ENCODE measurements at regions of chr1 and their contacts with region 1.

Region 1: GRCh38 chr1:12124693-12125421 is 41.9 kb upstream of the TNFRSF1B start:
- DNase-seq: peak; percentile 62 to 88 (median 76)
- ATAC-seq: peak; percentile 86
- H3K4me3 ChIP-seq: no peak overlapping the region
- H3K4me3 Mint-ChIP-seq: peak overlapping the region in 8 of 10 donors; percentile 24 to 65 (median 39)
- H3K27ac ChIP-seq: no peak overlapping the region
- H3K27ac Mint-ChIP-seq: peak overlapping the region in 8 of 9 donors; percentile 2 to 92 (median 46)
- H3K4me1 ChIP-seq: peaks cover 16 to 17% of the 10 kb centered on the region in 2 donors
- H3K4me1 Mint-ChIP-seq: peaks cover 39 to 46% (median 42%) of the 10 kb centered on the region in 7 donors
- H3K27me3 ChIP-seq: no peaks in the 10 kb centered on the region
- H3K27me3 Mint-ChIP-seq: no peaks in the 10 kb centered on the region

Region 2: GRCh38 chr1:12142891-12143630 is 18.2 kb after region 1 on chr1:
- CTCF ChIA-PET with region 1: interaction called, 45 read pairs
- POLR2A ChIA-PET with region 1: interaction called, 3 read pairs
- intact Hi-C with region 1: no loop called
- DNase-seq: no peak
- ATAC-seq: peak; percentile 66
- H3K4me3 ChIP-seq: no peak overlapping the region
- H3K4me3 Mint-ChIP-seq: peak overlapping the region in 8 of 10 donors; percentile 1 to 69 (median 52)
- H3K27ac ChIP-seq: no peak overlapping the region
- H3K27ac Mint-ChIP-seq: peak overlapping the region; percentile 76 to 94 (median 92)
- H3K4me1 ChIP-seq: peaks cover 24 to 37% of the 10 kb centered on the region in 2 donors
- H3K4me1 Mint-ChIP-seq: peaks cover 37 to 54% (median 46%) of the 10 kb centered on the region in 7 donors
- H3K27me3 ChIP-seq: no peaks in the 10 kb centered on the region
- H3K27me3 Mint-ChIP-seq: no peaks in the 10 kb centered on the region

Region 3: DNA sequence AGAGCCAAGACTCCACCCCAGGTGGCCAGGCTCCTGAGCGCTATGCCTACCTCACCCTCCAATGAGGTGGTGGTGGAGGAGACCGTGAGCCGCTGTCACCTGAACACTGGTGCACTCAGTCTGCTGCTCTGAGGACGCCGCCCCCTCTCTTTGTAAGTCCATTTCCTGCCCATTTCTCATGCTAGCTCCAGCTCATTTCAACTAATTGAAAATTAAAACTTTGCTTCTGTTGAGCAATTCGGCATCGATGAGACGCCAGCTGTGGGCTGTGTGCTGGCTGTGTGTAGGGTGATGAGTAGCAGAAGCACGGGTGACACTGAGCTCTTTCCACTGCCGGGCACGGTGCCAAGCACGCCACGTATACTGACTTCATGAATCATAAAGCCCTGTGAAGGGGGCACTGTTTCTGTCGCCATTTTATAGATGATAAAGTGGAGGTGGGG is 53.2 kb after region 1 on chr1:
- CTCF ChIA-PET with region 1: interaction called, 36 read pairs
- POLR2A ChIA-PET with region 1: interaction called, 15 read pairs
- intact Hi-C with region 1: loop called (anchors 1 kb)
- DNase-seq: peak; percentile 75 to 96 (median 85)
- ATAC-seq: peak; percentile 74
- H3K4me3 ChIP-seq: peak overlapping the region; percentile 38
- H3K4me3 Mint-ChIP-seq: peak overlapping the region; percentile 81 to 92 (median 86)
- H3K27ac ChIP-seq: peak overlapping the region; percentile 82
- H3K27ac Mint-ChIP-seq: peak overlapping the region; percentile 89 to 100 (median 97)
- H3K4me1 ChIP-seq: peaks cover 66 to 80% of the 10 kb centered on the region in 2 donors
- H3K4me1 Mint-ChIP-seq: peaks cover 51 to 91% (median 80%) of the 10 kb centered on the region in 7 donors
- H3K27me3 ChIP-seq: no peaks in the 10 kb centered on the region
- H3K27me3 Mint-ChIP-seq: no peaks in the 10 kb centered on the region

Region 4: DNA sequence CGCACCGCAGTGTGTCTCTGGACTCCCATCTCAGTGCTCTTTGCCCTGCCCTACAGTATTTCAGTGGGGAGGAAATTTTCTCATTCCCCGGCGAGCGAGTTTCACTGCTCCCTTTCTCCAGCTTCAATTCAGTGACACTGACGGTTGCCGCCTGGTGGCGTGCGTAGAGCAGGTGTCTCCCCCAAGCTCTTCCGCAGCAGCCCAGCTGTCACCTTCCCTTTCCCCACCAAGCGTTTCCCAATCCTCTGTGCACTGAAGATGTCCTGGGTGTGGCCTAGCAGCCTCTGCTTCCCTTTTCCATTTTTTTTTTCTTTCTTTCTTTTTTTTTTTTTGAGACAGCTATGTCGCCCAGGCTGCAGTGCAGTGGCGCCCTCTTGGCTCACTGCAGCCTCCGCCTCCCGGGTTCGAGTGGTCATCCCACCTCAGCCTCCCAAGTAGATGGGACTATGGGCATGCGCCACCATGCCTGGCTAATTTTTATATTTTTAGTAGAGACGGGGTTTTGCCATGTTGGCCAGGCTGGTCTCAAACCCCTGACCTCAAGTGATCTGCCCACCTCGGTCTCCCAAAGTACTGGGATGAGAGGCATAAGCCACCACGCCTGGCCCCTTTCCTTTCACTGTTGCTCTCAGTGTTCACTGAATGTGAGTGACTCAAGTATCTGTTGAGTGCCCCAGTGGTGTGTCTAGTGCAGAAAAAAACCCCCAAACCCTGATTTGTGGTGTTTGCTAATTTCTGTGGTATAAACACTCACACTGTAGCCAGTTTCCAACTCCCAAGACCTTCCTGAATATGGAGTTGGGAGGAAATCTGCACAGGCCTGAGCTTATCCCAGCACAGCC is 72.0 kb after region 1 on chr1:
- CTCF ChIA-PET with region 1: interaction called, 41 read pairs
- POLR2A ChIA-PET with region 1: interaction called, 10 read pairs
- intact Hi-C with region 1: loop called in 1 of 2 experiments (anchors 1 kb)
- DNase-seq: peak in 1 of 9 donors; percentile 29
- ATAC-seq: peak; percentile 77
- H3K4me3 ChIP-seq: no peak overlapping the region
- H3K4me3 Mint-ChIP-seq: no peak overlapping the region
- H3K27ac ChIP-seq: no peak overlapping the region
- H3K27ac Mint-ChIP-seq: peak overlapping the region in 2 of 9 donors; percentile 17 to 26
- H3K4me1 ChIP-seq: peaks cover 0 to 9% of the 10 kb centered on the region in 2 donors
- H3K4me1 Mint-ChIP-seq: peaks cover 0 to 39% (median 0%) of the 10 kb centered on the region in 7 donors
- H3K27me3 ChIP-seq: no peaks in the 10 kb centered on the region
- H3K27me3 Mint-ChIP-seq: no peaks in the 10 kb centered on the region

Region 5: GRCh38 chr1:12229835-12230548 is 105.1 kb after region 1 on chr1 and contains the start of gene VPS13D:
- CTCF ChIA-PET with region 1: interaction called, 18 read pairs
- POLR2A ChIA-PET with region 1: no interaction called
- intact Hi-C with region 1: no loop called
- DNase-seq: peak; percentile 70 to 89 (median 84)
- ATAC-seq: peak; percentile 98
- H3K4me3 ChIP-seq: peak within 1 kb of the TSS; percentile 82
- H3K4me3 Mint-ChIP-seq: peak within 1 kb of the TSS; percentile 84 to 95 (median 90)
- H3K27ac ChIP-seq: peak within 1 kb of the TSS; percentile 92
- H3K27ac Mint-ChIP-seq: peak within 1 kb of the TSS; percentile 63 to 91 (median 85)
- H3K4me1 ChIP-seq: peaks cover 19 to 21% of the 10 kb centered on the region in 2 donors
- H3K4me1 Mint-ChIP-seq: peaks cover 4 to 38% (median 27%) of the 10 kb centered on the region in 7 donors
- H3K27me3 ChIP-seq: no peaks in the 10 kb centered on the region
- H3K27me3 Mint-ChIP-seq: peaks cover 0 to 6% (median 0%) of the 10 kb centered on the region in 5 donors
- total RNA-seq, gene VPS13D: 43.8 to 94.4 (median 77.3) TPM